Activated naive CD4-positive, alpha-beta T cell treated with anti-CD3 and anti-CD28 coated beads for 36 hours (primary cell): ENCODE measurements at regions of chr16 and their contacts with region 1.

Region 1: GRCh38 chr16:46689365-46690280 is at the start of gene ORC6:
- DNase-seq: peak; percentile 98
- H3K4me3 Mint-ChIP-seq: no peak within 1 kb of the TSS
- H3K27ac Mint-ChIP-seq: peak within 1 kb of the TSS; percentile 64
- H3K4me1 Mint-ChIP-seq: peaks cover 47% of the 10 kb centered on the region
- H3K27me3 Mint-ChIP-seq: no peaks in the 10 kb centered on the region
- total RNA-seq, gene ORC6: 57.7 to 61.9 TPM

Region 2: DNA sequence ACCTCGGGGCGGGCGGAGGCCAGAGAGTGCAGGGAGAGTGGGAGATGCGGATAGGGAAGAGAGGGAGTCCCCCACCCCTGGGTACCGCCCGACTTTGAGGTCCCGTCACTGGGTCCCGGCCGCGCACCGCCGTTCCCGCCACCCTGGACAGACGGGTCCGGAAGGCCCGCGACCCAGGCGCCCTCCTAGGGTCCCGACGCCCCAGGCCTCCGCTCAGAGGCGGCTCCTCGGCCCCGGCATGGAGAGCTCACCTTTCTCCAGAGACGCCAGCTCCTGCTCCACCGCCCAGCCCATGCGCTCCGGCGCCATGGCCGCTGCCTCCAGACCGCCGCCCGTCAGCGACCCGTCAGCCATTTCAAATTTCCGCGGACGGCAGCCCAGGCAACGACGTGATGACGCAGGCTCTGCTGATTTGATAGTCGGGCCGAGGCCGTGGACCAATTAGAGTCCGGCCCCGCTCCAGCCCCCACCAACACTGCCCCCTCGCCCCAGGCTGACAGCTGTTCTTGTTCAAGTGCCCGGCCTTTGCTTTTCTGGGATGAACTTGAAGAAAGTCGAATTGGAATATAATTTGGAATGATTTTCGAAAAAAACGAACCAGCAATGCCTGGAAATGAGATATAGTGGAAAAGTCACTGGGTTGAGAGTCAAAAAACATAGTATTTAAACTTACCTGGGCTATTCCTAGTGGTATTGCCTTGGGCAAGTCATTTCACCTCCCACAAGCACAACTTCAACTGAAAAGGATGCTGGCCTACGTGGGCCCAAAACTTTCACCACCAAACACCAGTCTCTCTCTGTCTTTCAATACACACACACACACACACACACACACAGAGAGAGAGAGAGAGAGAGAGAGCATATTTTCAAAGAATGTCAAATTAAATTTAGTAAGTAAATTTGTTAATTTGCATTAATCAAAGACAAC is 68.4 kb before region 1 on chr16 and contains the start of gene SHCBP1:
- CTCF ChIA-PET with region 1: no interaction called
- intact Hi-C with region 1: loop called (anchors 2 kb)
- DNase-seq: peak; percentile 91
- H3K4me3 Mint-ChIP-seq: peak within 1 kb of the TSS; percentile 94
- H3K27ac Mint-ChIP-seq: peak within 1 kb of the TSS; percentile 70
- H3K4me1 Mint-ChIP-seq: peaks cover 14% of the 10 kb centered on the region
- H3K27me3 Mint-ChIP-seq: peaks cover 10% of the 10 kb centered on the region
- total RNA-seq, gene SHCBP1: 41.8 to 45.0 TPM

Region 3: GRCh38 chr16:46736695-46737094 is 47.1 kb after region 1 on chr16:
- CTCF ChIA-PET with region 1: no interaction called
- intact Hi-C with region 1: no loop called
- DNase-seq: no peak
- H3K4me3 Mint-ChIP-seq: no peak overlapping the region
- H3K27ac Mint-ChIP-seq: no peak overlapping the region
- H3K4me1 Mint-ChIP-seq: no peaks in the 10 kb centered on the region
- H3K27me3 Mint-ChIP-seq: no peaks in the 10 kb centered on the region

Region 4: GRCh38 chr16:46789499-46790414 is 100.1 kb after region 1 on chr16:
- CTCF ChIA-PET with region 1: interaction called, 3 read pairs
- intact Hi-C with region 1: loop called (anchors 1 kb)
- DNase-seq: peak; percentile 85
- H3K4me3 Mint-ChIP-seq: peak overlapping the region; percentile 74
- H3K27ac Mint-ChIP-seq: no peak overlapping the region
- H3K4me1 Mint-ChIP-seq: peaks cover 23% of the 10 kb centered on the region
- H3K27me3 Mint-ChIP-seq: no peaks in the 10 kb centered on the region

Region 5: GRCh38 chr16:46830902-46831647 is 141.5 kb after region 1 on chr16 and contains the start of gene C16orf87:
- CTCF ChIA-PET with region 1: interaction called, 3 read pairs
- intact Hi-C with region 1: loop called (anchors 1 kb)
- DNase-seq: peak; percentile 91
- H3K4me3 Mint-ChIP-seq: peak within 1 kb of the TSS; percentile 97
- H3K27ac Mint-ChIP-seq: peak within 1 kb of the TSS; percentile 96
- H3K4me1 Mint-ChIP-seq: peaks cover 31% of the 10 kb centered on the region
- H3K27me3 Mint-ChIP-seq: no peaks in the 10 kb centered on the region
- total RNA-seq, gene C16orf87: 13.4 to 13.5 TPM

Region 6: DNA sequence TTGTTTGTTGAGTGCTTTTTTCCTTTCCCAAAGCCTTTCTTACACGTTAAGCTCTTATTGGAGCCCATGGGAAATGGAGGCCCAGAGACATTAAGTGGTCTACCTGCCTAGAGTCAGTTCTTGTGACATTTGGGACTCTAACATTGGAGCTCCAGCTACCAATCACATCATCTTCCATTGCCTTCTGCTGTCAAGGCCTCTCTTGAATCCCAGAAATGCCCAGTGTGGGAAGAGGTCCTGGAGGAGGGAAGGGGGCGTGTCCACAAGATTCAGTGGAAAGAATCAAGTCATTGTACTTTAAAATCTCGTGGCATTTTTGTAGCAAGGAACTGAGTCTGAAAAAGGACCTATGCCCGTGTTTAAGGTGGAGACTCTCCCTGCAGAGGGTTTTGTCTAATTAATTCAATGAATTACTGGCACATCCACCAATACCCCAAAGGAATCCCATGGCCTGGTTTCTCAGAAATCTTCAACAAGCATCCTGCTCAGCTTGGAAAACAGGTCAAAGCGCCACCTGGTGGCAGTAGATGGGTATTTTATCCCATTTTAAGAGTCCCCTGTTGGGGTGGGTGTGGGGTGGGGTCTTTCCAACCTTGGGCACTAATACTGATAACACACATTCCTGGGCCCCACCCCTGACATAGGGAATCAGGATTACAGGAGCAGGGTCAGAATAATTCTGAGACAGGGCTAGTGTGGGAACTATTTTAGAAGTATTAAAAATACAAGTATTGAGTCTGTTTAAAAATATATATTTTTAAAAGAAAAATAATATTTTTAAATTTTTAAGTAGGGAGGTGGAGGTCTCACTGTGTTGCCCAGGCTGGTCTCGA is 219.1 kb after region 1 on chr16:
- CTCF ChIA-PET with region 1: interaction called, 3 read pairs
- intact Hi-C with region 1: loop called (anchors 1 kb)
- DNase-seq: peak; percentile 72
- H3K4me3 Mint-ChIP-seq: no peak overlapping the region
- H3K27ac Mint-ChIP-seq: no peak overlapping the region
- H3K4me1 Mint-ChIP-seq: peaks cover 10% of the 10 kb centered on the region
- H3K27me3 Mint-ChIP-seq: no peaks in the 10 kb centered on the region

Region 7: GRCh38 chr16:47037746-47038458 is 348.3 kb after region 1 on chr16:
- CTCF ChIA-PET with region 1: no interaction called
- intact Hi-C with region 1: no loop called
- DNase-seq: peak; percentile 91
- H3K4me3 Mint-ChIP-seq: peak overlapping the region; percentile 74
- H3K27ac Mint-ChIP-seq: no peak overlapping the region
- H3K4me1 Mint-ChIP-seq: peaks cover 8% of the 10 kb centered on the region
- H3K27me3 Mint-ChIP-seq: peaks cover 10% of the 10 kb centered on the region

Region 8: GRCh38 chr16:48244080-48244862 is 1554.6 kb after region 1 on chr16 and contains the start of gene LONP2:
- CTCF ChIA-PET with region 1: no interaction called
- intact Hi-C with region 1: loop called (anchors 1 kb)
- DNase-seq: peak; percentile 96
- H3K4me3 Mint-ChIP-seq: peak within 1 kb of the TSS; percentile 88
- H3K27ac Mint-ChIP-seq: peak within 1 kb of the TSS; percentile 79
- H3K4me1 Mint-ChIP-seq: peaks cover 38% of the 10 kb centered on the region
- H3K27me3 Mint-ChIP-seq: no peaks in the 10 kb centered on the region
- total RNA-seq, gene LONP2: 49.9 to 53.9 TPM